ENCODE measurements at regions of chr15 and their contacts with region 1.

Region 1: DNA sequence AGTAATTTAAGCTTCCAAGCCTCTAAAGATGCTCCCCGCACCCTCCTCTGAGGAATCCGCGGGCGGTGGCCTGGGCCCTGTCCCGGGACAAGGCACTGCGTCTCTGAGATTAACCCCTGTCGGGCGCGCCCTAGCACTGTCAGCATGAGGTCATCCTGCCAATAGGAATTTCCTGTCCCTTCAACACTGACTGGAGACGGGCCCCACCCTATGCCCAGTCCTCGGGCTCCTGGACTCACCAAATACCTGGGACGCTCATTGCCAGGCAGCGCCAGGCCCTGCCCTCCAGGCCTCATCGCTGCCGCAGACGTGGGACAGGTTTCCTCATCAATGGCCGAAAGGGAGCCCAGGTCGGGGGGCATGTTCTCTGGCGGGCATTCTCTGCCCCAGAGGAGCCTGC is 67.6 kb upstream of the SH3GL3 start:
- DNase-seq: no peak
- ATAC-seq: peak in 3 of 4 donors; percentile 12 to 37 (median 20)
- H3K4me3 ChIP-seq: no peak overlapping the region
- H3K27ac ChIP-seq: no peak overlapping the region
- H3K4me1 ChIP-seq: no peaks in the 10 kb centered on the region
- H3K27me3 ChIP-seq: peaks cover 0 to 12% (median 0%) of the 10 kb centered on the region in 4 donors
- CTCF ChIP-seq: no peak

Region 2: DNA sequence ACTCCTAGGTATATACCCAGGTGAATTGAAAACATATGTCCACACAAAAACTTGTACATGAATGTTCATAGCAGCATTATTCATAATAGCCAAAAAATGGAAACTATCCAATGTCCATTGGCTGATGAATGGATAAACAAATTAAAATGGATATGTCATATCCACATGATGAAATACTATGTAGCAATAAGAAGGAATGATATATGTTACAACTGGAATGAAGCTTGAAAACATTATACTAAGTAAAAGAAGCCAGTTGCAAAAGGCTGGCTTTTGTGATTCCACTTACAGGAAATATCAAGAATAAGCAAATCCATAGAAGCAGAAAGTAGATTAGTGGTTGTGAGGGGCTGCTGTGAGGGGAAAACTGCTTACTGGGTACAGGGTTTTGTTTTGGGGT is 128.8 kb before region 1 on chr15:
- intact Hi-C with region 1: loop called in 1 of 3 experiments (anchors 5 kb)
- DNase-seq: no peak
- ATAC-seq: no peak
- H3K4me3 ChIP-seq: no peak overlapping the region
- H3K27ac ChIP-seq: no peak overlapping the region
- H3K4me1 ChIP-seq: no peaks in the 10 kb centered on the region
- H3K27me3 ChIP-seq: peaks cover 0 to 9% (median 2%) of the 10 kb centered on the region in 4 donors
- CTCF ChIP-seq: no peak

Measured in pancreas (tissue), 10 donors.